ENCODE measurements at regions of chr7 and their contacts with region 1.

Region 1: GRCh38 chr7:40232242-40232893 is 97.6 kb downstream of the SUGCT start:
- DNase-seq: peak; percentile 77
- ATAC-seq: peak; percentile 84
- H3K4me3 ChIP-seq: no peak overlapping the region
- H3K27ac ChIP-seq: no peak overlapping the region
- H3K4me1 ChIP-seq: no peaks in the 10 kb centered on the region
- H3K27me3 ChIP-seq: no peaks in the 10 kb centered on the region
- CTCF ChIP-seq: peak; percentile 73

Region 2: GRCh38 chr7:40221836-40222235 is 10.5 kb before region 1 on chr7:
- CTCF ChIA-PET with region 1: no interaction called
- POLR2A ChIA-PET with region 1: no interaction called
- intact Hi-C with region 1: no loop called
- DNase-seq: peak; percentile 62
- ATAC-seq: peak; percentile 72
- H3K4me3 ChIP-seq: no peak overlapping the region
- H3K27ac ChIP-seq: no peak overlapping the region
- H3K4me1 ChIP-seq: peaks cover 21% of the 10 kb centered on the region; the same call in 1 of the 2 replicates
- H3K27me3 ChIP-seq: no peaks in the 10 kb centered on the region
- CTCF ChIP-seq: no peak

Region 3: GRCh38 chr7:40306596-40306995 is 74.2 kb after region 1 on chr7:
- CTCF ChIA-PET with region 1: interaction called, 5 read pairs
- POLR2A ChIA-PET with region 1: no interaction called
- intact Hi-C with region 1: loop called (anchors 5 kb)
- DNase-seq: peak; percentile 33
- ATAC-seq: no peak
- H3K4me3 ChIP-seq: no peak overlapping the region
- H3K27ac ChIP-seq: no peak overlapping the region
- H3K4me1 ChIP-seq: peaks cover 17% of the 10 kb centered on the region
- H3K27me3 ChIP-seq: no peaks in the 10 kb centered on the region
- CTCF ChIP-seq: no peak

Region 4: GRCh38 chr7:40329601-40330153 is 97.3 kb after region 1 on chr7:
- CTCF ChIA-PET with region 1: no interaction called
- POLR2A ChIA-PET with region 1: no interaction called
- intact Hi-C with region 1: loop called (anchors 1 kb)
- DNase-seq: peak; percentile 75
- ATAC-seq: peak; percentile 62
- H3K4me3 ChIP-seq: no peak overlapping the region
- H3K27ac ChIP-seq: no peak overlapping the region
- H3K4me1 ChIP-seq: no peaks in the 10 kb centered on the region
- H3K27me3 ChIP-seq: no peaks in the 10 kb centered on the region
- CTCF ChIP-seq: peak; percentile 77

Region 5: DNA sequence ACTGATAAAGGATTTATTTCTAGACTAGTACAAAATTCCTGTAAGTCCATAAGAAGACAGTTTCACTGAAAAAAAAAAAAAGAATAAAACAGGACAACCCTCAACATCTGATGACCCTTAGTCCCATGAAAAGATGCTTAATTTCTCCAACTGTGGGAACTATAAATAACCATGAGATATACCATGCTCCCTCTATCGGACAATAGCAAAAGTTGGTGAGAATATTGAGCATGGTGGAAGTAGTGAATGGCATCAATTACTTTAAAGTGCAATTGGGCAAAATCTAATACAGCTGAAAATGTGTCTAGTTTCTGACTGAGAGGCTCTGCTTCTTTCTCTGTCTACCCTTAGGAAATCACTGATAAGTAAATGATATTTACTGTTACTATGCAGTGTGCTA is 251.3 kb after region 1 on chr7:
- CTCF ChIA-PET with region 1: no interaction called
- POLR2A ChIA-PET with region 1: no interaction called
- intact Hi-C with region 1: loop called (anchors 10 kb)
- DNase-seq: peak; percentile 36
- ATAC-seq: 0 out of 2 replicates have a peak, but pooled peaks have one; percentile 31
- H3K4me3 ChIP-seq: no peak overlapping the region
- H3K27ac ChIP-seq: no peak overlapping the region
- H3K4me1 ChIP-seq: no peaks in the 10 kb centered on the region
- H3K27me3 ChIP-seq: no peaks in the 10 kb centered on the region
- CTCF ChIP-seq: peak; percentile 60

Region 6: DNA sequence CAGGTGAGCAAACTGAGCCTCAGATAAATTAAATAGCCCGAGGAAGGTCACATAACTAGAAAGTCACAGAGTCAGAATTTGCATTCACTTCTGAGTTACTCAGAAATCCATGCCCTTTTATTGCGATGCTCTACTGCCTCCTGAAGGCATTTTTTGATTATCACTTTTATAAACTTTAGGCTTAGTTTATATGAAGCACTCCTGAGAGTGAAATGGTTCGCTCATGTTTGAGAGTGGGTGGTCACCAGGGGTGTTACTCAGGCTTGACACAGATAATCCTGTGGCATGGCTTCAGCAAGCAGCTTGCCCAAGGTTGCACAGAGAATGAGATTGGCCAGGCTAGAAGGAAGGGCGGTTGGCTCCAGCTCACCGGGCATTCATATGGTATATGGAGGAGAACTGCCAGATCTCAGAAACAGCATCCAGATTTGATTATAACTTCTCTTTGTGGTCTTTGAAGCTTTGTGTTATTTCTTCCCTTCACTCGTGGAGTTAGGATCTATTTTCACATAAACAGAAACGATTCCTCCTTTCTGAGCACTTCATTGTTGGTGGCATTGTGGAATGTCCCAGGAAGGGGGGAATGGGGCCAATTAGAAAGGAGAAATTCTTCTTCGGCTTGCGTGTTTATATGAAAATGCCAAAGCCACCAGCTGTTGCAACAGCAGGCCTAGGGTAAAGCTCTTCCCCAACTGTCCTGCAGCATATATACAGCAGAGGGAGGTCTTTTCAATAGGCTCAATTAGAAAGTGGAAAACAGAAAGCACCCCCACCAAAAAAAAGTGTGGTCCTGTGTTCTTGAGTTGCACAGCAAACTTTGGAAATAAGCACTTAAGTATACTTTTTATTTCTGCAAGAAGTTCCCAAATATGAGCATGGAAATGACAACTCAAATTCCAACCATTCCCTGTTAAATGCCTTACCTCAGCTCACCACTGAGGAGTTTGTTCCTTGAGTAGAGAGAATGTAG is 531.2 kb after region 1 on chr7:
- CTCF ChIA-PET with region 1: no interaction called
- POLR2A ChIA-PET with region 1: no interaction called
- intact Hi-C with region 1: loop called (anchors 1 kb)
- DNase-seq: peak; percentile 33
- ATAC-seq: peak; percentile 71
- H3K4me3 ChIP-seq: no peak overlapping the region
- H3K27ac ChIP-seq: no peak overlapping the region
- H3K4me1 ChIP-seq: no peaks in the 10 kb centered on the region
- H3K27me3 ChIP-seq: no peaks in the 10 kb centered on the region
- CTCF ChIP-seq: peak; percentile 27

Region 7: GRCh38 chr7:41731492-41732435 is 1499.4 kb after region 1 on chr7:
- CTCF ChIA-PET with region 1: interaction called, 7 read pairs
- POLR2A ChIA-PET with region 1: no interaction called
- intact Hi-C with region 1: loop called (anchors 5 kb)
- DNase-seq: peak; percentile 44
- ATAC-seq: no peak
- H3K4me3 ChIP-seq: no peak overlapping the region
- H3K27ac ChIP-seq: no peak overlapping the region
- H3K4me1 ChIP-seq: peaks cover 17% of the 10 kb centered on the region
- H3K27me3 ChIP-seq: no peaks in the 10 kb centered on the region
- CTCF ChIP-seq: peak; percentile 75